CD14-positive monocyte (primary cell): ENCODE measurements at regions of chr2 and their contacts with region 1.

Region 1: DNA sequence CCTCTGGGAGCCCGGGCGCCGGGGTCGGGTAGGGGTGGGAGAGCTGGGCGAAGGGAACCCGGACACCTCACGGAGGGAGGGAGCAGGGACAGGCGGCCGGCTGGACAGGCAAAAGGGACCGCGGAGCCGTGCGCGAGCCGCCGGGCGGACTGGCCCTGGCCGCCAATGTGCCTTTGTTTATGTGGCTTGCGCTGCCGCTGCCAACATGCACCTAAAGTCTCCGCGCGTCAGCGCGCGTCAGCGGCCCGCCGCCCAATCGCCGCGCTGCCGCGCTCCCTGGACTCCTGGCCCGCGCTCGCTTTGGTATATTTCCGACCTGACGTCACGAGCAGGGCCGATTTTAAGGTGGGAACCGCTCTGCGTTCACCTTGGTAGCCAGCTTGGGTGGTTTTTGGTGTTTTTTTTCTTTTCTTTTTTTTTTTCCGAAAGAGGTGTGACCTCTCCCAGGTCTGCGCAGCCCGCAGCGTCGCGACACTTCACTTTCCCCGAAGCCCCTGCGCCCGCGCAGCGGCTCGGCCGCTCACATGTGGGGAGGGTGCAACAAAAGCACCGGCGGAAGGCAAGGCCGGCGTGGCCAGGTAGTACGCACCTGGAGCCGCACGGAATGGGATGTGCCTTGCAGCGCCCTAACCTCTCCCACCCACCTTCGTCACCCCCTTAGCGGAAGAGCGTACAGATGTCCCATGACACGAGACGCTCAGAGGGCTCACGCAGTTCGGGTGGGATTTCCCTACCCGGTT is at the start of gene NR4A2:
- DNase-seq: peak; percentile 90 to 96 (median 91)
- H3K4me3 ChIP-seq: peak within 1 kb of the TSS; percentile 57 to 92 (median 81)
- H3K4me3 Mint-ChIP-seq: peak within 1 kb of the TSS; percentile 96 to 97
- H3K27ac ChIP-seq: peak within 1 kb of the TSS; percentile 92 to 97
- H3K27ac Mint-ChIP-seq: peak within 1 kb of the TSS; percentile 97 to 99 (median 98)
- H3K4me1 ChIP-seq: peaks cover 59 to 66% of the 10 kb centered on the region in 2 donors
- H3K4me1 Mint-ChIP-seq: peaks cover 51% of the 10 kb centered on the region
- H3K27me3 ChIP-seq: peaks cover 32 to 35% of the 10 kb centered on the region in 2 donors
- H3K27me3 Mint-ChIP-seq: peaks cover 36 to 45% (median 42%) of the 10 kb centered on the region in 3 donors
- CTCF ChIP-seq: no peak
- polyA plus RNA-seq, gene NR4A2: 12.1 to 213 (median 21.6) TPM

Region 2: DNA sequence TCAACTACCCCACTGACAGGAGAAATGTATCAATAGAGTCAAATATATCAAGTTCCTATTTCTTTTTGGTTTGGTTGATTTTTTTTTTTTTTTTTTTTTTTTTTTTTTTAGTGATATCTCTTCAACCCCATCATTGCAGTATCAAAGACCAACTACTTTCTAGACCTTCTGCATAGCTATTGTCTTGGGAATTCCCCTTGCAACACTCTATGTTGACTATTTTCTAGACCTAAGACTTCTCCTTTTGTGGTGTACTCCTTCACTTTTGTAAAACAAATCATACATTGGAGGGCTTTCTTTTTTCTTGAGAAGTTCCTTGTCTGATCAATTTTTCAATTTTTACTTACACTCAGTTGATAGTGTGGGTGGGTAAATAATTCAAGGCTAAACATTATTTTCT is 46.4 kb after region 1 on chr2:
- intact Hi-C with region 1: no loop called
- DNase-seq: peak in 2 of 3 donors; percentile 28 to 50
- H3K4me3 ChIP-seq: no peak overlapping the region
- H3K4me3 Mint-ChIP-seq: no peak overlapping the region
- H3K27ac ChIP-seq: no peak overlapping the region
- H3K27ac Mint-ChIP-seq: no peak overlapping the region
- H3K4me1 ChIP-seq: no peaks in the 10 kb centered on the region
- H3K4me1 Mint-ChIP-seq: peaks cover 4% of the 10 kb centered on the region
- H3K27me3 ChIP-seq: peaks cover 0 to 2% of the 10 kb centered on the region in 2 donors
- H3K27me3 Mint-ChIP-seq: peaks cover 2 to 6% (median 3%) of the 10 kb centered on the region in 3 donors
- CTCF ChIP-seq: no peak

Region 3: GRCh38 chr2:156466739-156467405 is 134.2 kb after region 1 on chr2:
- intact Hi-C with region 1: loop called in 1 of 2 experiments (anchors 10 kb)
- DNase-seq: no peak
- H3K4me3 ChIP-seq: no peak overlapping the region
- H3K4me3 Mint-ChIP-seq: peak overlapping the region; percentile 62 to 69
- H3K27ac ChIP-seq: peak overlapping the region; percentile 46
- H3K27ac Mint-ChIP-seq: peak overlapping the region; percentile 28 to 96 (median 76)
- H3K4me1 ChIP-seq: peaks cover 61 to 68% of the 10 kb centered on the region in 2 donors
- H3K4me1 Mint-ChIP-seq: peaks cover 81% of the 10 kb centered on the region
- H3K27me3 ChIP-seq: no peaks in the 10 kb centered on the region
- H3K27me3 Mint-ChIP-seq: no peaks in the 10 kb centered on the region
- CTCF ChIP-seq: no peak